CD4-positive, alpha-beta memory T cell (primary cell): ENCODE measurements at regions of chr12 and their contacts with region 1.

Region 1: GRCh38 chr12:45543906-45544315 is 185.6 kb upstream of the ARID2 start:
- DNase-seq: peak; percentile 58 to 70 (median 64)
- H3K4me3 ChIP-seq: no peak overlapping the region
- H3K4me3 Mint-ChIP-seq: no peak overlapping the region
- H3K27ac ChIP-seq: no peak overlapping the region
- H3K27ac Mint-ChIP-seq: no peak overlapping the region
- H3K4me1 ChIP-seq: no peaks in the 10 kb centered on the region
- H3K4me1 Mint-ChIP-seq: peaks cover 0 to 6% (median 2%) of the 10 kb centered on the region in 4 donors
- H3K27me3 ChIP-seq: no peaks in the 10 kb centered on the region
- H3K27me3 Mint-ChIP-seq: peaks cover 0 to 1% of the 10 kb centered on the region in 2 donors

Region 2: DNA sequence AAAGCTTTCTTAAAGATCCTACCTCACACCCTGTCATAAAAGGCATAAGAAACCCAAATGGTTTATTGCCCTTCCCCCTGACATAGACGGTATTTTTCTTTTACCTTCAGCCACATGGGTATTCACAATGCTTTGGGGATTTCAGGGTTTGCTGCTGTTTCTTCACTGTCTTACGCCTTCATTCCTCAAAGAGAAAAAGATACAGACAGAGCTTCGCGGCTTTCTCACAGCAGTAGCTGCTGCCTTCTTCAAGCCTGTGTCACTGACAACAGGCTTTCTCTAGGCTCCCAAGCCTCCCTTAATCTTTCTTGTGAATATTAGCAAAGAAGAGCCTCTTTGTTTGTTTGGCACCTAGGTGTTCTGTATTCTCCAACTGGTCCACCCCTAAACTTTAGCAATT is 11.8 kb before region 1 on chr12:
- CTCF ChIA-PET with region 1: interaction called, 31 read pairs
- POLR2A ChIA-PET with region 1: no interaction called
- intact Hi-C with region 1: no loop called
- DNase-seq: no peak
- H3K4me3 ChIP-seq: no peak overlapping the region
- H3K4me3 Mint-ChIP-seq: no peak overlapping the region
- H3K27ac ChIP-seq: no peak overlapping the region
- H3K27ac Mint-ChIP-seq: peak overlapping the region in 1 of 7 donors; percentile 7
- H3K4me1 ChIP-seq: no peaks in the 10 kb centered on the region
- H3K4me1 Mint-ChIP-seq: no peaks in the 10 kb centered on the region
- H3K27me3 ChIP-seq: no peaks in the 10 kb centered on the region
- H3K27me3 Mint-ChIP-seq: peaks cover 1 to 8% of the 10 kb centered on the region in 2 donors

Region 3: DNA sequence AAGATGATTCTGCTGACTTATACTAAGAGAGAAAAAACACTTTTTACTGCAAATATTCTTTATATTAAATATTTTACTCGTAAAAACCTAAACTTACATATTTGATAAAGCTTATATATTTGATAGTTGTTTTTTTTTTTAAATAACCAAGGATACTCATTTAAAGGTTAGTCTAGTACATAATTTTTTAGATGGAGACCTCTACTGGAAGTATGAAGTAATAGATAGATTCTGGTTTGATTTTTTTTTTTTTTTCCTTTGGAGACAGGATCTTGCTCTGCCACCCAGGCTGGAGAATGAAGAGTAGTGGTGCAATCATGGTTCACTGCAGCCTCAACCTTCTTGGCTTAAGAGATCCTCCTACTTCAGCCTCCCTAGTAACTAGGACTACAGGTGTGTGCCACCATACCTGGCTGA is 202.0 kb after region 1 on chr12:
- CTCF ChIA-PET with region 1: interaction called, 74 read pairs
- POLR2A ChIA-PET with region 1: no interaction called
- intact Hi-C with region 1: loop called (anchors 1 kb)
- DNase-seq: peak in 4 of 5 donors; percentile 37 to 57 (median 48)
- H3K4me3 ChIP-seq: no peak overlapping the region
- H3K4me3 Mint-ChIP-seq: no peak overlapping the region
- H3K27ac ChIP-seq: no peak overlapping the region
- H3K27ac Mint-ChIP-seq: peak overlapping the region in 2 of 7 donors; percentile 12 to 64
- H3K4me1 ChIP-seq: peaks cover 50% of the 10 kb centered on the region
- H3K4me1 Mint-ChIP-seq: peaks cover 37 to 73% (median 50%) of the 10 kb centered on the region in 4 donors
- H3K27me3 ChIP-seq: no peaks in the 10 kb centered on the region
- H3K27me3 Mint-ChIP-seq: no peaks in the 10 kb centered on the region

Region 4: DNA sequence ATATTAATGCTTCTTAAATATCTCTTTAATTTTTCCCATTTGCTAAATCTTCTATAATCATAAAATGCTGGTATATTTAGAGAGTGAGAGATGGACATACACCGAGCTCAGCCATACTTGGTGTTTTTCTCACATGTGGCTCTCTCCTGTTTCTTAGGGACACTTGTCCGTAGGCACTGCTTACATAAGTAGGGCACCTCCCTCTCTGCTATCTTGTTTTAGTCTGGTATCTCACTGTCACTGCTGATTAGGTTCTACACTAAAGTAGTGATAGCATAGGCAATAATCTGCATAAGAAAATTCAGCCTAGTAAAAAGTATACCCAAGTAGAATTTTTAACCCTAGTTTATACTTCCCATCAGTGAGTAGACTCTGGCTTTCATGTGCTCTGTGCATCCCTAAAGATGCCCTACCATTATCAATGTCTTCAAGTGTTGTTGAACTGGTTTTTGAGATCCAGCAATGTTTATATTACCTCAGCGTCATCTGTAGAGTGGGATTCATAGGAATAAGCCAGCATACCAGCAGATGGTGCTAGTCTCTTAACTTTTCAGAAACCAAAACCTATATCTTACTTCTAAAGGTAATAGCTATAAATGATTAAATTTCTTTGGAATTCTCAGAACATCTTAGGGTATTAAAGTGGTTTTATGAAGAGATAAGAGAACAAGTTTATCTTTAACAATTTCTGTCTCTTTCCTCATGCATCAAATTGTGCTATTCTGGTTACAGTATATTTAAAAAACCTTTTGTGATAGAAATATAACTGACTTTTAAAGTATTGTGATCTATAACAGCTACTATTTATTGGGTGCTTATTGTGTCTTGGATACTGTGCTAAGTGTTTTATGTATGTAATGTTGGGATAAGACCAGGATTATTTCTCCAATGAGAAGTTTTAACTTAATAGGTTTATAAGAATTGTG is 218.5 kb after region 1 on chr12:
- CTCF ChIA-PET with region 1: interaction called, 10 read pairs
- POLR2A ChIA-PET with region 1: no interaction called
- intact Hi-C with region 1: no loop called
- DNase-seq: peak in 3 of 5 donors; percentile 11 to 19 (median 13)
- H3K4me3 ChIP-seq: no peak overlapping the region
- H3K4me3 Mint-ChIP-seq: peak overlapping the region in 2 of 8 donors; percentile 5 to 29
- H3K27ac ChIP-seq: no peak overlapping the region
- H3K27ac Mint-ChIP-seq: peak overlapping the region in 3 of 7 donors; percentile 26 to 29 (median 29)
- H3K4me1 ChIP-seq: peaks cover 24% of the 10 kb centered on the region
- H3K4me1 Mint-ChIP-seq: peaks cover 32 to 59% (median 44%) of the 10 kb centered on the region in 4 donors
- H3K27me3 ChIP-seq: no peaks in the 10 kb centered on the region
- H3K27me3 Mint-ChIP-seq: no peaks in the 10 kb centered on the region

Region 5: DNA sequence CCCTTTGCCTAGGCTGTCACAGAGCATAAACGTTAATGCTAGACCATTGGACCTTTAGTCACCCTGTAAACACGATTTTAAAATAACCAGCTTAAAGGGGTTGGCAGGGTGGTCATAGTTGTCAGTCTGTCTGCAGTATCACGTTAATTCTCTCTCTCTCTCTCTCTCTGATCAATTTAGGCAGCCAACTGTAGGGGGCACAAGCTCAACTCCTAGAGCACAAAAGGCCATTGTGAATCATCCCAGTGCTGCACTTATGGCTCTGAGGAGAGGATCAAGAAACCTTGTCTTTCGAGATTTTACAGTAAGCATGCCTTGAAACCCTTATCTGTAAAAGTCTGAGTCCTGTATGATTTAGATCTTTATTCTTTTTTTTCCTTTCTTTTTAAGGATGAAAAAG is 349.3 kb after region 1 on chr12:
- CTCF ChIA-PET with region 1: no interaction called
- POLR2A ChIA-PET with region 1: no interaction called
- intact Hi-C with region 1: loop called (anchors 5 kb)
- DNase-seq: no peak
- H3K4me3 ChIP-seq: no peak overlapping the region
- H3K4me3 Mint-ChIP-seq: no peak overlapping the region
- H3K27ac ChIP-seq: no peak overlapping the region
- H3K27ac Mint-ChIP-seq: no peak overlapping the region
- H3K4me1 ChIP-seq: peaks cover 15% of the 10 kb centered on the region
- H3K4me1 Mint-ChIP-seq: peaks cover 15 to 27% (median 23%) of the 10 kb centered on the region in 4 donors
- H3K27me3 ChIP-seq: no peaks in the 10 kb centered on the region
- H3K27me3 Mint-ChIP-seq: no peaks in the 10 kb centered on the region

Region 6: GRCh38 chr12:47361389-47362021 is 1817.6 kb after region 1 on chr12:
- CTCF ChIA-PET with region 1: no interaction called
- POLR2A ChIA-PET with region 1: no interaction called
- intact Hi-C with region 1: no loop called
- DNase-seq: peak; percentile 23 to 64 (median 29)
- H3K4me3 ChIP-seq: peak overlapping the region; percentile 37 to 41
- H3K4me3 Mint-ChIP-seq: peak overlapping the region; percentile 73 to 93 (median 86)
- H3K27ac ChIP-seq: peak overlapping the region; percentile 90
- H3K27ac Mint-ChIP-seq: peak overlapping the region; percentile 94 to 99 (median 96)
- H3K4me1 ChIP-seq: peaks cover 81% of the 10 kb centered on the region
- H3K4me1 Mint-ChIP-seq: peaks cover 48 to 63% (median 55%) of the 10 kb centered on the region in 4 donors
- H3K27me3 ChIP-seq: no peaks in the 10 kb centered on the region
- H3K27me3 Mint-ChIP-seq: no peaks in the 10 kb centered on the region